HCT116 (cell line): ENCODE measurements at regions of chr13 and their contacts with region 1.

Region 1: GRCh38 chr13:111216166-111216960 is 101.3 kb downstream of the ARHGEF7 start:
- DNase-seq: no peak
- ATAC-seq: peak; percentile 89
- H3K4me3 ChIP-seq: no peak overlapping the region
- H3K27ac ChIP-seq: no peak overlapping the region
- H3K4me1 ChIP-seq: no peaks in the 10 kb centered on the region
- H3K27me3 ChIP-seq: no peaks in the 10 kb centered on the region
- CTCF ChIP-seq: peak; percentile 45 to 63 (median 60)
- POLR2A ChIP-seq: no peak
- RAD21 ChIP-seq: peak; percentile 68

Region 2: DNA sequence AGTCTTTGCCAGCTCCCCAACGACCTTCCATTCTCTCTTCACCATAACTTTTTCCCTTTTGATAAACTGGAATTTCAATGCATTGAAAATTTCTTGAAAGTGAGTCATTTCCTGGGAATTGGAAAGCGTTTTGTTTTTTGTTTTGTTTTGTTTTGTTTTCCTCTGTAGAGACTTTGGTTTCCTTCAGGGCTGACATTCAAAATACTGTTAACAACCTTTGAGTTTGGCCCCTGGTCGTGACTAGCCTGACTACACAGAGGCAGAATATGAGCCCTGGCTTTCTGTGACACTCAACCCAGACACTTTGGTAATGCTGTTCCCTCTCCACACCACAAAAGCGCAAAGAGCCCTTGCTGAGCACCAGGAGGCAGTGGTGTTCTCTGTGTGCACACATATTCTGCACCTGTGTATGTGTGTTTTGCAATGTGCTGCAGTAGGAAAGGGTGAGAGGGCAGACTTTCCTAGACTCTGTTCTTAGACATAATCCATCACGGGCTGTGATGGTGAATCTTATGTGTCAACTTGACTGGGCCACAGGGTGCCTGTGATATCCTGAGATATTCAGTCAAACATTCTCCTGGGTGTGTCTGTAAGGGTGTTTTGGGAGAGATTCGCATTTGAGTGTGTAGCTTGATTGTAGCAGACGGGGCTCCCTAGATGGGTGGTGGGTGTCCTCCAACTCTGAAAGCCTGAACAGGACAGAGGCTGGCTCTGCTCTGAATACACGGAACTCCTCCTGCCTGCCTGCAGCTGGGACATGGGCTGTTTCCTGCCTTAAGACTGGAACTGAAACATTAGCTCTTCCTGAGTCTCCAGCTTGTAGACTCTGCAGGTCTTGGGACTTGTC is 272.0 kb before region 1 on chr13:
- CTCF ChIA-PET with region 1: no interaction called
- POLR2A ChIA-PET with region 1: no interaction called
- RAD21 ChIA-PET with region 1: no interaction called
- intact Hi-C with region 1: loop called (anchors 1 kb)
- DNase-seq: peak; percentile 77
- ATAC-seq: peak; percentile 97
- H3K4me3 ChIP-seq: no peak overlapping the region
- H3K27ac ChIP-seq: peak overlapping the region; percentile 38
- H3K4me1 ChIP-seq: peaks cover 10 to 64% of the 10 kb centered on the region in 2 experiments
- H3K27me3 ChIP-seq: no peaks in the 10 kb centered on the region
- CTCF ChIP-seq: peak in 2 of 3 experiments; percentile 93 to 94; a peak in 4 of 6 replicates
- POLR2A ChIP-seq: no peak
- RAD21 ChIP-seq: no peak

Region 3: DNA sequence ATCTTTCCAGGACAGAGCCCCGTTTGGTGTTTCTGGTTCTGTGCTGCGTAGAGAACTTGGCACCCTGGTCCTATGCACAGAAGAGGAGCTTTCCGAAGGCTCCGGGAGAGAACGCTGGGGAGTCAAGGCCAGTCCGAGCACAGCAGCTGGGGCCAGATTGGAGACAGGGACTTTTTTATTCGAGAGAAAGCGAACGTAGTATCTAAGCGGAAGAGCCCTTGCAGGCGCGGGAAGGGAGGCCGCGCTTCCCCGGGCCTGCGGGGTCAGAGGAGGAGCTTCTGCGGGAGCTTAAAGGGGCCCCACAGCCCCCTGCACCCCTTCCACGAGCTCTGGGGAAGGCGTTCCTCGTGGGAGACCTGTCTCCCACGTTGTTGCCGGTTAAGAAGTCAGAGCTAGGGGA is 149.8 kb before region 1 on chr13:
- CTCF ChIA-PET with region 1: interaction called, 18 read pairs
- POLR2A ChIA-PET with region 1: no interaction called
- RAD21 ChIA-PET with region 1: interaction called, 5 to 6 read pairs
- intact Hi-C with region 1: no loop called
- DNase-seq: no peak
- ATAC-seq: no peak
- H3K4me3 ChIP-seq: no peak overlapping the region
- H3K27ac ChIP-seq: no peak overlapping the region
- H3K4me1 ChIP-seq: peaks cover 3 to 14% of the 10 kb centered on the region in 2 experiments; a peak in 1 of 4 replicates
- H3K27me3 ChIP-seq: no peaks in the 10 kb centered on the region
- CTCF ChIP-seq: no peak
- POLR2A ChIP-seq: no peak
- RAD21 ChIP-seq: no peak

Region 4: DNA sequence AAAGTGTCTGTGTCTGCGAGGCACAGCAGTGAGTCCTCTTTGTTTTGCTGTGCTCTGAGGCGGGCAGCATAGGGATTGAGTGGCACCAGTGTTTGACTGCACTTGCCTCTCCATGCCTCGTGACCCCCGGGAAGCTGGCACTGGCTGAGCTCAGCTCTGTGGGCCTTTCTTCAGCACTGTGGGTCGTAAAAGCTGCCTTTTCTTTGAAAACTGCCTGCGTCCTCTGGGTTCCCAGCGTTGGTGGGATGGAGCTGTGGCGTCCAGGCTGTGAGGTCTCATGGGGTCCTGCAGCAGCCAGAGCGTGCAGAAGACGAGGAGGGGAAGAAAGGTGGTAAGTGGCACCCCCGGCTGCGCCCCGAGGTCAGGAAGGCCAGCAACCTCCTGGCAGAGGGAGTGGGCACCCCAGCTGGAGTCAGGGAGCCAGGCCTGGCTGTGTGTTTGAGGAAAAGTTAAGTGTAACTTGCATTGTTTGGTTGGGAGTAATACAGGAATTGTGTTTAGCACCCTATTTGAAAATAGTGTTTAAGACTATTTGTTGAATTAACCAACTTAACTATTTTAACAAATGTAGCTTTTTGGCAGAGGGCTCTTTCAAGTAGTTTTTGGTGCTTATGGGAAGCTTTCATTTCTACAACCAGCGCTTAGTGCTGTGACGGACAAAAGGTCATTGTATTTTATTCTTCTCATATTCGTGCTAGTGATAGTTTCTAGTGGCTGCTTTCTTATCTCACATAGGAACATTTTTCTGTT is 24.8 kb after region 1 on chr13:
- CTCF ChIA-PET with region 1: no interaction called
- POLR2A ChIA-PET with region 1: no interaction called
- RAD21 ChIA-PET with region 1: no interaction called
- intact Hi-C with region 1: no loop called
- DNase-seq: no peak
- ATAC-seq: no peak
- H3K4me3 ChIP-seq: no peak overlapping the region
- H3K27ac ChIP-seq: no peak overlapping the region
- H3K4me1 ChIP-seq: no peaks in the 10 kb centered on the region
- H3K27me3 ChIP-seq: no peaks in the 10 kb centered on the region
- CTCF ChIP-seq: no peak
- POLR2A ChIP-seq: no peak
- RAD21 ChIP-seq: no peak